HepG2 (cell line): ENCODE measurements at regions of chr6 and their contacts with region 1.

Region 1: DNA sequence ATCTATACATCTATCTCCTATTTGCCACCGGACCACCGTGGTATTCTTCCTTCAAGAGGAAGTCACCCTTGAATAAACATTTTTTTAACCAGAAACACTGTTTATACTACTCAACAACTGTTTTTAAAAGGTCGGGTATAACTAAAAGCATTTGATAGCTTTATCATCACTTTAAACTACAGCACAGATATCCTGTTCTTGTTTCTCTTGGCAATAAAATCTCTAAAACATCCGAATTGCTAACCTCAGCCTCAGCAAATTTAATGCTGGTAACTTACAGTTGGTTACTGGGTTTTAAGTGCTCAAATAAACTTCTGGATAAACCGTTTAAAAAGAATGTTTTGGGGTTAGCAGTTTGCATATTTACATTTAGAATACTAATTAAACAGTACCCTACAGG is 20.4 kb downstream of the ZUP1 start:
- DNase-seq: no peak
- ATAC-seq: no peak
- H3K4me3 ChIP-seq: no peak overlapping the region
- H3K27ac ChIP-seq: no peak overlapping the region
- H3K4me1 ChIP-seq: no peaks in the 10 kb centered on the region
- H3K27me3 ChIP-seq: no peaks in the 10 kb centered on the region
- CTCF ChIP-seq: no peak
- EP300 ChIP-seq: no peak
- POLR2A ChIP-seq: no peak
- RAD21 ChIP-seq: no peak

Region 2: DNA sequence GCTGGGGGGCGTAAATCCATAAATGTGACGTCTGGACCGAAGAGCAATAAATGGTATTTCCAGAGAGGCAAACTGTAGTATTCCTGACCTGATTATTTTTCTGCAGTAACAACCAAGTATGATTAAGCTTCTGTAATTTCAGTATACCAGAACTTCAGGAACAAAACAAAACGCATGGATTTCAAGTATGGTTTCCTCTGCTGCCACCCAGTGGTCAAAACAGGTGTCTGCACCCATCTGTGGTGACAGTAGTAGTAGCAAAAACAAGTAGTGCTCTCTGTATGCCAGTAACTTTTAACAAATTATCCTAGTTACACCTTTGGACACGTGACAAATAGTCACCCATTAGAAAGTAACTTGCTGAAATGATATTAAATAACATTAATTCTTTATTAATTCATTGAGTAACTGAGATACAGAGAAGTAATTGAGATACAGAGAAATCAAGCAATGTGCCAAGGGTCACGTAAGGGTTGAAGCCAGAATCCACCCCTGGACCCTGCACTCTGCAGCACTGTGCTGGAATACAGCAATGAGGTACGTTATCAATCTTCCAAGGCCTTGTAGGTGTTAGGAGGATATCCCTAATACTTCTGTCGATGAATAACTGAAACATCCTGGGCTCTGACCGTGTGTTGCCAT is 86.7 kb before region 1 on chr6:
- CTCF ChIA-PET with region 1: interaction called, 5 read pairs
- POLR2A ChIA-PET with region 1: no interaction called
- in situ Hi-C with region 1: no loop called
- intact Hi-C with region 1: loop called (anchors 1 kb)
- DNase-seq: peak; percentile 70
- ATAC-seq: peak; percentile 78
- H3K4me3 ChIP-seq: peak overlapping the region in 2 of 3 experiments; percentile 13 to 28; a peak in 2 of 6 replicates
- H3K27ac ChIP-seq: no peak overlapping the region
- H3K4me1 ChIP-seq: peaks cover 31% of the 10 kb centered on the region
- H3K27me3 ChIP-seq: no peaks in the 10 kb centered on the region; a peak in 3 of 5 replicates
- CTCF ChIP-seq: peak; percentile 91
- EP300 ChIP-seq: no peak
- POLR2A ChIP-seq: no peak
- RAD21 ChIP-seq: peak; percentile 78

Region 3: GRCh38 chr6:116570856-116571682 is 77.1 kb before region 1 on chr6 and contains the start of gene RWDD1:
- CTCF ChIA-PET with region 1: no interaction called
- POLR2A ChIA-PET with region 1: no interaction called
- in situ Hi-C with region 1: loop called (anchors 5 kb)
- intact Hi-C with region 1: loop called (anchors 2 kb)
- DNase-seq: peak; percentile 99
- ATAC-seq: peak; percentile 94
- H3K4me3 ChIP-seq: peak within 1 kb of the TSS; percentile 89 to 96 (median 92)
- H3K27ac ChIP-seq: peak within 1 kb of the TSS; percentile 90
- H3K4me1 ChIP-seq: peaks cover 35% of the 10 kb centered on the region
- H3K27me3 ChIP-seq: no peaks in the 10 kb centered on the region; a peak in 1 of 5 replicates
- CTCF ChIP-seq: no peak; the same call in 1 of the 2 replicates
- EP300 ChIP-seq: peak; percentile 35 to 43; a peak in 3 of 4 replicates
- POLR2A ChIP-seq: peak; percentile 91 to 94
- RAD21 ChIP-seq: peak; percentile 39
- total RNA-seq, gene RWDD1: 67.1 and 90.5 TPM in 2 replicates